ENCODE measurements at regions of chr5 and their contacts with region 1.

Region 1: DNA sequence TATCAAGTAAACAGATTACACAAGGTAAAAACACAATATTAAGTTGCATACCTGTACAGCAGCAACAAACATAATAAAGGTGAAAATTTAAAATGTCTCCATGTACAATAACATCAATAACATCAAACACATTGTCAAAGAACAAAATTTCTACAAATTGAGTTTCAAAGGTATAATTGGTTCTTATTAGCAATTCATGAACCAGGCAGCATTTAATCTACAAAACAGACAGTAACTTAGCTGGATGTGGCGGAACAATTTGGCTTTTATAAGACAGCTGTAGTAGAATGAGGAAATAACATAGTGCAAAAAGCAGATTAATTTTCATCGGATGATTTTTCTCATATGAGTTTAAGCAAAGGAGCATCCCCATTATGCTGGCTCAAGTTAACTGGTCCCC is 1176.8 kb downstream of the EFNA5 start:
- DNase-seq: no peak
- H3K4me3 ChIP-seq: no peak overlapping the region
- H3K27ac ChIP-seq: no peak overlapping the region
- H3K4me1 ChIP-seq: no peaks in the 10 kb centered on the region
- H3K27me3 ChIP-seq: no peaks in the 10 kb centered on the region
- CTCF ChIP-seq: no peak
- POLR2A ChIP-seq: no peak

Region 2: DNA sequence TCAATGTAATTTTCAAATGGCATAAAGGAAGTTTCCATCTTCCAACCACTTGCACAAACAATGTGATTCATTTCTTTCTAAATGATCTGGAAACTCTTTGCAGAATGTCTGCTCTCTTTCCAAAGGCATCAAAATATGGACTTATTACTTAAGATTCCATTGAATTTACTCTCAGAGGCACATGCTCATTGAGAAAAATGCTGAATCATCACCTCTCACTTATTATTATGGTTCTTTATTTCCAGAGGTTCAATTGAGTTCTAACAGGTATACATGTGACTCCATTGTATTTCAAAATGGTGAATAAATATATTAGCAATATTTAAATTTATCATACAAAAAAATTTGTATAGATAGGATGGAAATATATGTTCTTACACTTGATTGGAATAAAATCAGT is 36.2 kb after region 1 on chr5:
- intact Hi-C with region 1: loop called (anchors 2 kb)
- DNase-seq: no peak
- H3K4me3 ChIP-seq: no peak overlapping the region
- H3K27ac ChIP-seq: no peak overlapping the region
- H3K4me1 ChIP-seq: no peaks in the 10 kb centered on the region
- H3K27me3 ChIP-seq: no peaks in the 10 kb centered on the region
- CTCF ChIP-seq: no peak
- POLR2A ChIP-seq: no peak